Natural killer cell (primary cell): ENCODE measurements at regions of chr19 and their contacts with region 1.

Region 1: GRCh38 chr19:57477191-57478008 is at the start of gene ZNF772:
- DNase-seq: peak; percentile 77 to 95
- ATAC-seq: peak; percentile 97 to 100 (median 100)
- H3K4me3 ChIP-seq: peak within 1 kb of the TSS; percentile 63
- H3K4me3 Mint-ChIP-seq: peak within 1 kb of the TSS; percentile 96
- H3K27ac ChIP-seq: peak within 1 kb of the TSS; percentile 75
- H3K27ac Mint-ChIP-seq: peak within 1 kb of the TSS; percentile 94 to 97
- H3K4me1 ChIP-seq: peaks cover 15% of the 10 kb centered on the region
- H3K4me1 Mint-ChIP-seq: peaks cover 18 to 24% of the 10 kb centered on the region in 2 donors
- H3K27me3 ChIP-seq: no peaks in the 10 kb centered on the region
- H3K27me3 Mint-ChIP-seq: peaks cover 8 to 14% of the 10 kb centered on the region in 2 donors
- CTCF ChIP-seq: peak; percentile 50
- total RNA-seq, gene ZNF772: 1.3 to 3.5 (median 1.4) TPM

Region 2: GRCh38 chr19:57240311-57241090 is 236.9 kb before region 1 on chr19 and contains the start of gene ZNF805:
- intact Hi-C with region 1: no loop called
- DNase-seq: peak; percentile 89 to 98
- ATAC-seq: peak; percentile 92 to 97 (median 94)
- H3K4me3 ChIP-seq: peak within 1 kb of the TSS; percentile 78
- H3K4me3 Mint-ChIP-seq: peak within 1 kb of the TSS; percentile 95
- H3K27ac ChIP-seq: peak within 1 kb of the TSS; percentile 87
- H3K27ac Mint-ChIP-seq: peak within 1 kb of the TSS; percentile 94 to 96
- H3K4me1 ChIP-seq: peaks cover 22% of the 10 kb centered on the region
- H3K4me1 Mint-ChIP-seq: peaks cover 29 to 34% of the 10 kb centered on the region in 2 donors
- H3K27me3 ChIP-seq: no peaks in the 10 kb centered on the region
- H3K27me3 Mint-ChIP-seq: no peaks in the 10 kb centered on the region
- CTCF ChIP-seq: no peak
- total RNA-seq, gene ZNF805: 25.9 to 32.7 (median 31.0) TPM

Region 3: GRCh38 chr19:57362997-57363705 is 114.2 kb before region 1 on chr19 and contains the starts of genes TRAPPC2B and ZNF547:
- intact Hi-C with region 1: no loop called
- DNase-seq: peak; percentile 99 to 100
- ATAC-seq: peak; percentile 88 to 96 (median 90)
- H3K4me3 ChIP-seq: peak within 1 kb of the TSS; percentile 56
- H3K4me3 Mint-ChIP-seq: peak within 1 kb of the TSS; percentile 92
- H3K27ac ChIP-seq: peak within 1 kb of the TSS; percentile 93
- H3K27ac Mint-ChIP-seq: peak within 1 kb of the TSS; percentile 96 to 98
- H3K4me1 ChIP-seq: peaks cover 14% of the 10 kb centered on the region
- H3K4me1 Mint-ChIP-seq: peaks cover 18 to 19% of the 10 kb centered on the region in 2 donors
- H3K27me3 ChIP-seq: no peaks in the 10 kb centered on the region
- H3K27me3 Mint-ChIP-seq: no peaks in the 10 kb centered on the region
- CTCF ChIP-seq: no peak
- total RNA-seq, gene TRAPPC2B: 7.4 to 15.6 (median 13.7) TPM
- total RNA-seq, gene ZNF547: 0.48 to 1.2 (median 0.92) TPM

Region 4: GRCh38 chr19:57406516-57407123 is 70.8 kb before region 1 on chr19:
- intact Hi-C with region 1: no loop called
- DNase-seq: peak; percentile 56 to 80
- ATAC-seq: peak in 2 of 3 donors; percentile 29 to 32
- H3K4me3 ChIP-seq: no peak overlapping the region
- H3K4me3 Mint-ChIP-seq: no peak overlapping the region
- H3K27ac ChIP-seq: no peak overlapping the region
- H3K27ac Mint-ChIP-seq: no peak overlapping the region
- H3K4me1 ChIP-seq: peaks cover 12% of the 10 kb centered on the region
- H3K4me1 Mint-ChIP-seq: peaks cover 16 to 19% of the 10 kb centered on the region in 2 donors
- H3K27me3 ChIP-seq: no peaks in the 10 kb centered on the region
- H3K27me3 Mint-ChIP-seq: no peaks in the 10 kb centered on the region
- CTCF ChIP-seq: peak; percentile 72

Region 5: GRCh38 chr19:57527136-57527881 is 49.9 kb after region 1 on chr19 and contains the start of gene ZNF549:
- intact Hi-C with region 1: loop called (anchors 1 kb)
- DNase-seq: peak; percentile 82 to 94
- ATAC-seq: peak; percentile 98 to 99 (median 99)
- H3K4me3 ChIP-seq: peak within 1 kb of the TSS; percentile 89
- H3K4me3 Mint-ChIP-seq: peak within 1 kb of the TSS; percentile 95
- H3K27ac ChIP-seq: peak within 1 kb of the TSS; percentile 81
- H3K27ac Mint-ChIP-seq: peak within 1 kb of the TSS; percentile 90 to 96
- H3K4me1 ChIP-seq: peaks cover 13% of the 10 kb centered on the region
- H3K4me1 Mint-ChIP-seq: peaks cover 23 to 26% of the 10 kb centered on the region in 2 donors
- H3K27me3 ChIP-seq: no peaks in the 10 kb centered on the region
- H3K27me3 Mint-ChIP-seq: no peaks in the 10 kb centered on the region
- CTCF ChIP-seq: no peak
- total RNA-seq, gene ZNF549: 7.1 to 12.1 (median 8.6) TPM